ENCODE measurements at regions of chr10 and their contacts with region 1.

Region 1: DNA sequence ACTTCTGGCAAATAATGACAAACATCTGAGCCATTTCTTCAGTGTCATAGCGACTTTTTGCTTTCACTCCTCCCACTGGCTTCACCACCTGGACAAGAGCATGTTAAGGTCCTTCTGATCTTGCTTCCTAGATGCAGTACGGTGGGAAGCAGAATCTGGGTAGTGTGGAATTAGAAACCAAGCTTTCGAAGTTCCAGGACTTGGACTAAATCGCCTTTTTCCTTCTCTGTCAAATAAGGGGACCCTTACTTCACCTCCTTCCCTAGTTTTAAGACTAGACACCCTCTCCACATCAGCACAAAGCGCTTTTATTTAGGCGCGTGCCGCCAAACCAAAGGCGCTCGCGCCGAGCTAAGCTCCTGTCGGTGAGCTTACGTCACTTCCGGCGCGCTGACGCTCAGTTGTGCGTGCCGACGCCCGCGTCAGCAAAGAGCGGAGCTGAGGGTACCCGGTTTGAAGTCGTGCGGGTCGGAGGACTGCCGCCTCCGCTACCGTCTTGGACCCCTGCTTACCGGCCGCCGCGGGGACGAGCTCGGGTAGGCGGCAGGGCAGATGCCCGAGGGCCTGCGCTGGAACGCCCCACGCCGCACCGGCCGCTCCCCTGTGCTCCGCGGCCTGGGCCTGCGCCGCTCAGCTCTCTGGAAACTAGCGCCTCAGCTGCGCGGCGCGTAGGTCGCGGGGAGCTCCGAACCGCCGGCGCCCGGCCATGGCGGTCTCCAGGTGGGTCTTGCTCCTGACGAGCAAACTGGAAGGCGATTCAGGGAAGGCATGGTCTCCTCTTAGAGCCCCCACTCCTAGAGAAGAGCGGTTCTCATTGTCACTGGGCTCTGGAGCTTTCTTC is at the start of gene BTAF1:
- DNase-seq: peak; percentile 91
- ATAC-seq: peak; percentile 94
- H3K4me3 Mint-ChIP-seq: peak within 1 kb of the TSS; percentile 92
- H3K27ac Mint-ChIP-seq: peak within 1 kb of the TSS; percentile 96
- H3K4me1 Mint-ChIP-seq: peaks cover 42% of the 10 kb centered on the region
- H3K27me3 Mint-ChIP-seq: no peaks in the 10 kb centered on the region
- CTCF ChIP-seq: no peak
- total RNA-seq, gene BTAF1: 63.4 and 74.7 TPM in 2 replicates

Region 2: DNA sequence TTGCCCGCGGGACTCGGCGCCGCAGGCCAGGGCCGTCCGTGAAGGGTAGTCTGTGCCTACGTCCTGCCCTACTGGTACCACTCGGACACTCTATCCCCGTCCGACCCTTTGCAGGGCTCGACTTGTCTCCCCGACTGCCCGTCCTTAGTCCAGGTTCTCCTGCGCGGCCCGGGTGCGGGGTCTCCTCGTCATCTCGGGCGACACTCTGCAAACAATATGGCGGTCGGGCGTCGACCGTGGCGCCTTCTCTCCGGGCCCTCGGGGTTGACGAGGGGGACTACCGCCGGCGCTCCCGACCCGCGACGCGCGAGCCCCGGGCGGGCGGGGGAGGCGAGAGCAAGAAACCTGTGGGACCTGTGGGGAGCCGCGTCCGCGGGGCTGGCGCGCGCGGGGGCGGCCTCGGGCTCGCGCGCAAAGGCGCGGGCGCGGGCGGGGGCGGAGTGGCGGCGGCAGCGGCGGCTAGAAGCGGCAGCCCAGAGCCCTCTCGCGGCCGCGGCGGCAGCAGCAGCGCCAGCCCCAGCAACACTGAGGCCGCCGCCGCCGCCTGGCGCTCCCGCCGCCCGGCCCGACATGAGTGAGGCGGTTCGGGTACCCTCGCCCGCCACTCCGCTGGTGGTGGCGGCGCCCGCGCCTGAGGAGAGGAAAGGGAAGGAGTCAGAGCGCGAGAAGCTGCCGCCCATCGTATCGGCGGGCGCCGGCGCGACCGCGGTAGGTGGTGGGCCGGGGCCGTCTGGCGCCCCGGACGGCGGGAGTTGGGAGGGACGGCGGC is 513.5 kb before region 1 on chr10 and contains the start of gene HECTD2:
- CTCF ChIA-PET with region 1: no interaction called
- POLR2A ChIA-PET with region 1: no interaction called
- intact Hi-C with region 1: loop called (anchors 1 kb)
- DNase-seq: peak; percentile 84
- ATAC-seq: peak; percentile 82
- H3K4me3 Mint-ChIP-seq: peak within 1 kb of the TSS; percentile 89
- H3K27ac Mint-ChIP-seq: peak within 1 kb of the TSS; percentile 90
- H3K4me1 Mint-ChIP-seq: peaks cover 13% of the 10 kb centered on the region
- H3K27me3 Mint-ChIP-seq: no peaks in the 10 kb centered on the region
- CTCF ChIP-seq: no peak
- total RNA-seq, gene HECTD2: 8.1 and 8.6 TPM in 2 replicates

Region 3: GRCh38 chr10:91893051-91893450 is 30.5 kb before region 1 on chr10:
- CTCF ChIA-PET with region 1: no interaction called
- POLR2A ChIA-PET with region 1: no interaction called
- intact Hi-C with region 1: no loop called
- DNase-seq: no peak
- ATAC-seq: no peak
- H3K4me3 Mint-ChIP-seq: no peak overlapping the region
- H3K27ac Mint-ChIP-seq: no peak overlapping the region
- H3K4me1 Mint-ChIP-seq: peaks cover 1% of the 10 kb centered on the region
- H3K27me3 Mint-ChIP-seq: peaks cover 24% of the 10 kb centered on the region
- CTCF ChIP-seq: no peak